ENCODE measurements at regions of chr13 and their contacts with region 1.

Region 1: GRCh38 chr13:20843166-20843565 is 59.4 kb downstream of the XPO4 start:
- DNase-seq: peak in 3 of 5 donors; percentile 35 to 68 (median 63)
- ATAC-seq: peak; percentile 92 to 96 (median 95)
- H3K4me3 ChIP-seq: peak overlapping the region in 2 of 12 donors; percentile 5 to 6
- H3K27ac ChIP-seq: peak overlapping the region in 11 of 12 donors; percentile 19 to 65 (median 50)
- H3K4me1 ChIP-seq: peaks cover 0 to 51% (median 22%) of the 10 kb centered on the region in 12 donors
- H3K27me3 ChIP-seq: no peaks in the 10 kb centered on the region
- CTCF ChIP-seq: no peak
- POLR2A ChIP-seq: no peak

Region 2: DNA sequence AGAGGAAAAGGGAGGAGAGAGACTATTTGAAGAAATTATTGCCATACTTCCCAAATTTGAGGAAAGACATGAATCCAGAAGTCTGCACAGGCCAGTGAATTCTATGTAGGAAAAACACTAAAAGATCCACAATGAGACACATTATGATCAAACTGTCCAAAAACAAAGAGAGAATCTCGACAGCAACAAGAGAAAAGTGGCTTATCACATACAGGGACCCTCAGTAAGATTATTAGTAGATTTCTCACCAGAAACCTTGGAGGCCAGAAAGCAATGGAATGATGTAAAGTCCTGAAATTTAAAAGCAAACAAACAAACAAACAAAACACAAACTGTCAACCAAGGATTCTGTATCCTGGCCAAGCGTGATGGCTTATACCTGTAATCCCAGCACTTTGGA is 195.4 kb before region 1 on chr13:
- intact Hi-C with region 1: no loop called
- DNase-seq: no peak
- ATAC-seq: no peak
- H3K4me3 ChIP-seq: no peak overlapping the region
- H3K27ac ChIP-seq: no peak overlapping the region
- H3K4me1 ChIP-seq: no peaks in the 10 kb centered on the region
- H3K27me3 ChIP-seq: no peaks in the 10 kb centered on the region
- CTCF ChIP-seq: no peak
- POLR2A ChIP-seq: no peak

Region 3: GRCh38 chr13:20819715-20820114 is 23.5 kb before region 1 on chr13:
- intact Hi-C with region 1: loop called in 1 of 10 experiments (anchors 2 kb)
- DNase-seq: no peak
- ATAC-seq: no peak
- H3K4me3 ChIP-seq: peak overlapping the region in 3 of 12 donors; percentile 13 to 34 (median 26)
- H3K27ac ChIP-seq: peak overlapping the region in 10 of 12 donors; percentile 8 to 74 (median 56)
- H3K4me1 ChIP-seq: peaks cover 0 to 34% (median 12%) of the 10 kb centered on the region in 12 donors
- H3K27me3 ChIP-seq: no peaks in the 10 kb centered on the region
- CTCF ChIP-seq: no peak
- POLR2A ChIP-seq: no peak

Region 4: DNA sequence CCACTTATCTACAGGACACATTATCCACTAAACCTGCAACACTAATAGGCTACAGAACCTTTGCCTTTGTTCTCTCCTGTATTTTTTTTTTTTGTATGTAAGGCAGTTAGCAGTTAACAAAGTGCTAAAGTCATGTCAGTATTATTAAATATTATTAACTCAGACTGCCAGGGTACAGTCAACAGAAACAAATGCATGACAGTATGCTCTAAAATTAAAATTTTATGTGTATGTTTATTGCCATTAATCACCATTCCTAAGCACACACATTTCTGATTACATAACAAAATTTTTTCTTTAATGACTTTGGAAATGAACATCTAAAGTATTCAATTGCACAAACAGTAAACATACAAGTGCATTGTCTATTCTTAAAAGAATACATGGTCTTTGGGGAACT is 17.7 kb after region 1 on chr13:
- intact Hi-C with region 1: loop called in 1 of 10 experiments (anchors 1 kb)
- DNase-seq: no peak
- ATAC-seq: no peak
- H3K4me3 ChIP-seq: no peak overlapping the region
- H3K27ac ChIP-seq: no peak overlapping the region
- H3K4me1 ChIP-seq: peaks cover 0 to 3% (median 0%) of the 10 kb centered on the region in 12 donors
- H3K27me3 ChIP-seq: no peaks in the 10 kb centered on the region
- CTCF ChIP-seq: no peak
- POLR2A ChIP-seq: no peak

Region 5: GRCh38 chr13:20902438-20903163 is 59.4 kb after region 1 on chr13 and contains the start of gene XPO4:
- intact Hi-C with region 1: loop called in 1 of 10 experiments (anchors 5 kb)
- DNase-seq: peak; percentile 81 to 91 (median 84)
- ATAC-seq: peak; percentile 83 to 98 (median 97)
- H3K4me3 ChIP-seq: peak within 1 kb of the TSS; percentile 72 to 99 (median 92)
- H3K27ac ChIP-seq: peak within 1 kb of the TSS; percentile 86 to 97 (median 92)
- H3K4me1 ChIP-seq: peaks cover 0 to 24% (median 15%) of the 10 kb centered on the region in 12 donors
- H3K27me3 ChIP-seq: no peaks in the 10 kb centered on the region
- CTCF ChIP-seq: no peak
- POLR2A ChIP-seq: peak in 1 of 2 donors; percentile 52
- total RNA-seq, gene XPO4: 18.5 to 53.7 (median 28.4) TPM

Region 6: GRCh38 chr13:20924758-20925394 is 81.7 kb after region 1 on chr13:
- intact Hi-C with region 1: no loop called
- DNase-seq: peak in 4 of 5 donors; percentile 67 to 85 (median 70)
- ATAC-seq: peak in 3 of 4 donors; percentile 53 to 71 (median 56)
- H3K4me3 ChIP-seq: no peak overlapping the region
- H3K27ac ChIP-seq: no peak overlapping the region
- H3K4me1 ChIP-seq: no peaks in the 10 kb centered on the region
- H3K27me3 ChIP-seq: no peaks in the 10 kb centered on the region
- CTCF ChIP-seq: peak; percentile 59 to 85 (median 78)
- POLR2A ChIP-seq: no peak